ENCODE measurements at regions of chr3 and their contacts with region 1.

Region 1: DNA sequence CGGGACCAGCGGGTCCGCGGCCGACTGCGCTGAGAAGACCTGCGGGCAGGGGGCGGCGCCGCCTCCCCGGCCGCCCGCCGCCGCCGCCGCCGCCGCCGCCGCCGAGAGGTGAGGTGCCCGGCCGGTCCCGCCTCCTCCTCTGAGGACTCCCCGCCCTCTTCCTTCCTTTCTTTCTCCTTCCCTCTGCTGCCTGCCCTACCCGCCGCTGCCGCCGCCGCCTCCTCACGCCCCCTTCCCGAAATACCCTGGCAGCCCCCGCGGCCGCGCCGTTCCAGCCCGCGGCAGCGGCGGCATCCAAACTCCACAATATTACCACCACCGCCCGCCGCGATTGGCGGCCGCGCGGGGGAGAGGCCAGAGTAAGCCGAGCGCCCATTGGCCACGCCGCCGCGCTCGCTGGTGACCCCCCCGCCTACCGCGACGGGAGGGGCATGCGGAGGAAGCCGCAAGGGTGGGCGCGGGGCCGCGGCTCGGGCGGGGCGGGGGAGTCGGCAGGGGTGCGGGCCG is 61.8 kb upstream of the ANKRD28 start:
- DNase-seq: peak; percentile 92
- H3K4me3 Mint-ChIP-seq: peak overlapping the region; percentile 93
- H3K27ac Mint-ChIP-seq: peak overlapping the region; percentile 93
- H3K4me1 Mint-ChIP-seq: peaks cover 21% of the 10 kb centered on the region
- H3K27me3 Mint-ChIP-seq: no peaks in the 10 kb centered on the region
- CTCF ChIP-seq: no peak

Region 2: DNA sequence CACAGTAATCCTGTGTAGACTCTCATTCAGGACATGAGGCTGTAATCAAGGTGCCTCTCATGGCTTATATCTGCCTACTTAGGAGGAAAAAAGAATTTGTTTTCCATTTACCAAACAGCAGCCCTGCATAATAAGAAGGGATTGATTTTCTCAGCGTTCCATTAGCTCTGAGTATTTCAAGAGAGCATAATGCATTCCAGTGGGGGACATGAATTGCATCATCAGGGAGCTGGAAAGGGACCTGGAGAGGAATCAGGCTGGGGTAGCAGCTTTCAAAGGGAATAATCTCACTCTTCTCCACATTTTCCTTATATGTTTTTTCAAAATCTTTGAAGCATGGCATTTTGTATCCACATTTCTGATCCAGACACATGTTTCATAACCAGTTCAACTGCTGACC is 88.8 kb after region 1 on chr3:
- CTCF ChIA-PET with region 1: no interaction called
- POLR2A ChIA-PET with region 1: no interaction called
- intact Hi-C with region 1: no loop called
- DNase-seq: no peak
- H3K4me3 Mint-ChIP-seq: no peak overlapping the region
- H3K27ac Mint-ChIP-seq: no peak overlapping the region
- H3K4me1 Mint-ChIP-seq: no peaks in the 10 kb centered on the region
- H3K27me3 Mint-ChIP-seq: no peaks in the 10 kb centered on the region
- CTCF ChIP-seq: no peak

Region 3: DNA sequence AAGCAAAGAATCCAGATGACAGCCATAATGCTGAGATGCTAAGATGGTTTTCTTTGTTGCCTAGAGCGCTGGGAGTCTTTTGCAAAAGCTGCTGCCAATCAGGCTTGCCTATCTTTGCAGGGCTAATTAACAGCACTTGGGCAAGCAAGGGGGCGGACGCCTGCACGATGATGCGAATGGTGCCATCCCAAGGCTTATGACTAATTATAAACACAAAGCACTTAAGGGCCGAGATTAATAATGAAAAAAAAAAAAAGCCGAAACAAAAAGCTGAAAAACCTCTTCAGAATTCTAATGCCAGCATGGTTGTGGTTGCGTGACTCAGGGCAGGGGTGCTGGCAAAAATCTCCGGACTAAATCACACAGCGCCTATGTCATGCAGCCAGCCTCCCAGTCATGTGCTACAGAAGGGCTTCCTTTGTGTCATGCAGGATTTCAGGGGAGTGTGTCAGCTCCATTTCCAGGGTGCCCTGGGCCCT is 123.1 kb after region 1 on chr3:
- CTCF ChIA-PET with region 1: no interaction called
- POLR2A ChIA-PET with region 1: interaction called, 9 read pairs
- intact Hi-C with region 1: loop called (anchors 2 kb)
- DNase-seq: peak; percentile 92
- H3K4me3 Mint-ChIP-seq: peak overlapping the region; percentile 69
- H3K27ac Mint-ChIP-seq: peak overlapping the region; percentile 96
- H3K4me1 Mint-ChIP-seq: peaks cover 23% of the 10 kb centered on the region
- H3K27me3 Mint-ChIP-seq: no peaks in the 10 kb centered on the region
- CTCF ChIP-seq: no peak

Measured in MCF 10A (cell line).